WTC11 (cell line): ENCODE measurements at regions of chr3 and their contacts with region 1.

Region 1: GRCh38 chr3:30199096-30199759 is 407.2 kb upstream of the TGFBR2 start:
- DNase-seq: peak; percentile 62
- ATAC-seq: peak; percentile 53
- H3K4me3 Mint-ChIP-seq: no peak overlapping the region
- H3K27ac Mint-ChIP-seq: no peak overlapping the region
- H3K4me1 Mint-ChIP-seq: peaks cover 10% of the 10 kb centered on the region
- H3K27me3 Mint-ChIP-seq: no peaks in the 10 kb centered on the region
- CTCF ChIP-seq: peak; percentile 82

Region 2: GRCh38 chr3:30042274-30042859 is 156.9 kb before region 1 on chr3:
- CTCF ChIA-PET with region 1: interaction called, 84 read pairs
- POLR2A ChIA-PET with region 1: no interaction called
- DNase-seq: peak; percentile 58
- ATAC-seq: peak; percentile 73
- H3K4me3 Mint-ChIP-seq: no peak overlapping the region
- H3K27ac Mint-ChIP-seq: no peak overlapping the region
- H3K4me1 Mint-ChIP-seq: peaks cover 33% of the 10 kb centered on the region
- H3K27me3 Mint-ChIP-seq: no peaks in the 10 kb centered on the region
- CTCF ChIP-seq: peak; percentile 48

Region 3: DNA sequence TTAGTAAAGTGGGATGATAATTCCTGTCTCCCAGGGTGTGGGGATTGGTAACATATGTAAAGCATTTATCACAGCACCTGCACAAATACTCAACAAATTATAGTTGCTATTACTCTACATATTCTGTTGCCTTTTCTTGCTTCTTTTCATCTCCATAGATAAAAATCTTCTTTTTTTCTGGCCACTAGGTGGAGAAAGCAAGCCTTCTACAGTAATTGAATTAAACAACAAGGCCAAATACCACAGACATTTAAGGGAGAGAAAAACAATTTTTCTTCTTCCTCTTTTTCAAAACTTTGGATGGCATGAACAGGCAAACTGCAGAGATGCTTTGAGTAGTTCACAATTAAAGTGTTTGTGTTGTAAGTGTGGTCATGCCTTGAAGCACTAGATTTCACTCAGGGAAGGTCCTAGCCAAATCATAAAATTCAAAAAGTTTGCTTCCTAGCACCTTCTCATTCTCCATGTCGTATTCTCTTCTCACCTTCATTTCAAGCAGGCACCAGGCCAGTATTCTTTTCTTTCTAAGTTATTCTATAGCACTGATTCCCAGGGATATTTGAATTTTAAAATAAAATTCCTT is 86.2 kb before region 1 on chr3:
- CTCF ChIA-PET with region 1: interaction called, 20 read pairs
- POLR2A ChIA-PET with region 1: no interaction called
- DNase-seq: no peak
- ATAC-seq: peak; percentile 24; the same call in 1 of the 2 replicates
- H3K4me3 Mint-ChIP-seq: no peak overlapping the region
- H3K27ac Mint-ChIP-seq: no peak overlapping the region
- H3K4me1 Mint-ChIP-seq: peaks cover 5% of the 10 kb centered on the region
- H3K27me3 Mint-ChIP-seq: peaks cover 4% of the 10 kb centered on the region; the same call in 1 of the 2 replicates
- CTCF ChIP-seq: peak; percentile 43; the same call in 1 of the 2 replicates

Region 4: DNA sequence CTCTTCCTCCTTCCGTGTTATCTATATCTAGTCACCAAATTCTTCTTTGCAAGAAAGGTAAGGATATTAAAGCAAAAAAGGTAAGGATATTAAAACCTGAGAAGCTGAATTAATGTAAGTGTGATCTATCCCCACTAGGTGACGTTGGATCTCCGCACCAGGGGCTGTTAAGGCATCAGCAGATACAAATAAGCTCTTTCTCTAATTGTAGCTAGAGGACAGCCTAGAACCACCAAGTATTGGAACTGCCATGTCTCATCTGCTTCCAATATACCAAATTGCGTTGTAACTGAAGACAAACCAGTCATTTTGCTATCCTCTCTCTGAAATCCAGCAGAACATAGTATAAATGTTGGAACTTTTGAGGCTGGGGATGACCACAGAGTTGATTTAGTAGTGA is 64.0 kb before region 1 on chr3:
- CTCF ChIA-PET with region 1: interaction called, 10 read pairs
- POLR2A ChIA-PET with region 1: no interaction called
- DNase-seq: no peak
- ATAC-seq: no peak
- H3K4me3 Mint-ChIP-seq: no peak overlapping the region
- H3K27ac Mint-ChIP-seq: no peak overlapping the region
- H3K4me1 Mint-ChIP-seq: no peaks in the 10 kb centered on the region
- H3K27me3 Mint-ChIP-seq: no peaks in the 10 kb centered on the region
- CTCF ChIP-seq: no peak

Region 5: GRCh38 chr3:30370681-30371271 is 171.5 kb after region 1 on chr3:
- CTCF ChIA-PET with region 1: no interaction called
- POLR2A ChIA-PET with region 1: no interaction called
- DNase-seq: no peak
- ATAC-seq: no peak
- H3K4me3 Mint-ChIP-seq: no peak overlapping the region
- H3K27ac Mint-ChIP-seq: no peak overlapping the region
- H3K4me1 Mint-ChIP-seq: peaks cover 22% of the 10 kb centered on the region
- H3K27me3 Mint-ChIP-seq: no peaks in the 10 kb centered on the region; the same call in 1 of the 2 replicates
- CTCF ChIP-seq: no peak

Region 6: DNA sequence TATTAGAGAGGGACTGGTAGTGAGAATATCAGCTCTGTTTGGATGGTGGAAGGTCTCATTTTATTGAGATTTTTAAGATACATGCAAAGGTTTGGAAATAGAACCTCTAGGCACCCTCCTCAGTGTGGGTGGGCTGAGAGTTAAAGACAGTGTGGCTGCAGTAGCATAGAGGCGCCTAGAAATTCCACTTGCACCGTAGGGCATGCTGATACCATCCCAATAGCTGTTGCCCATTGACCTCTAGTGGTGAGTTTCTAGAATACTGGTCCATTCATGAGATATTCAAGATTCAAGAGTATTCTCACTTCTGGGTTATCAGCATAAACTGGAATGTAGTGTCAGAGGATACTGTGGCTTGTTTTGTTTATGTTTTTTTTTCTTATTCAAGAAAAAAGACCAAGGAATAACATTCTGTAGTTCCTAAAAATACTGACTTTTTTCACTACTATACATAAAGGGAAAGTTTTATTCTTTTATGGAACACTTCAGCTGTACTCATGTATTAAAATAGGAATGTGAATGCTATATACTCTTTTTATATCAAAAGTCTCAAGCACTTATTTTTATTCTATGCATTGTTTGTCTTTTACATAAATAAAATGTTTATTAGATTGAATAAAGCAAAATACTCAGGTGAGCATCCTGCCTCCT is 494.4 kb after region 1 on chr3:
- CTCF ChIA-PET with region 1: interaction called, 18 read pairs
- POLR2A ChIA-PET with region 1: no interaction called
- DNase-seq: peak; percentile 35
- ATAC-seq: peak; percentile 90
- H3K4me3 Mint-ChIP-seq: no peak overlapping the region
- H3K27ac Mint-ChIP-seq: no peak overlapping the region
- H3K4me1 Mint-ChIP-seq: peaks cover 69% of the 10 kb centered on the region
- H3K27me3 Mint-ChIP-seq: no peaks in the 10 kb centered on the region
- CTCF ChIP-seq: peak; percentile 57